GM12878 (cell line): ENCODE measurements at regions of chr13 and their contacts with region 1.

Region 1: DNA sequence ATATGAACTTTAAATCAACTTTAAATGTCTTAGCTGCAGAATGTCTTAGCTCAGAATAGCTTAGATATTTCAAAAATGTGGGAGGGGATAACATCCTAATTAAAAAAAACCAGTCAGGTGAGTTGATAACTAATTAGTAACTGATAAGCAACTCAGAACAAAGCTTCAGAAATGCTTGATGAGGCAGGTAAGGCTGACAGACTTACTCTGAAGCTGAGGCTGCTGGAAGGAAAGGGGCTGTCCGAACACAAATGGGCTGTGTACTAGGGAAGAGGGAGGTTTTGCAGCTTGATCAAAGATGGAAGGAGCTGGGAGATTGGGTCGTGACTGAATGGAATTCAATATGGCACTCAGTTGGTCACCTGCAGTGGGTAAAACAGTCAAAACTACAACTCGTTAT is 91.2 kb upstream of the FBXL3 start:
- DNase-seq: no peak
- ATAC-seq: no peak
- H3K4me3 ChIP-seq: no peak overlapping the region
- H3K27ac ChIP-seq: no peak overlapping the region
- H3K4me1 ChIP-seq: no peaks in the 10 kb centered on the region
- H3K27me3 ChIP-seq: no peaks in the 10 kb centered on the region
- CTCF ChIP-seq: no peak
- EP300 ChIP-seq: no peak
- POLR2A ChIP-seq: no peak
- RAD21 ChIP-seq: no peak

Region 2: DNA sequence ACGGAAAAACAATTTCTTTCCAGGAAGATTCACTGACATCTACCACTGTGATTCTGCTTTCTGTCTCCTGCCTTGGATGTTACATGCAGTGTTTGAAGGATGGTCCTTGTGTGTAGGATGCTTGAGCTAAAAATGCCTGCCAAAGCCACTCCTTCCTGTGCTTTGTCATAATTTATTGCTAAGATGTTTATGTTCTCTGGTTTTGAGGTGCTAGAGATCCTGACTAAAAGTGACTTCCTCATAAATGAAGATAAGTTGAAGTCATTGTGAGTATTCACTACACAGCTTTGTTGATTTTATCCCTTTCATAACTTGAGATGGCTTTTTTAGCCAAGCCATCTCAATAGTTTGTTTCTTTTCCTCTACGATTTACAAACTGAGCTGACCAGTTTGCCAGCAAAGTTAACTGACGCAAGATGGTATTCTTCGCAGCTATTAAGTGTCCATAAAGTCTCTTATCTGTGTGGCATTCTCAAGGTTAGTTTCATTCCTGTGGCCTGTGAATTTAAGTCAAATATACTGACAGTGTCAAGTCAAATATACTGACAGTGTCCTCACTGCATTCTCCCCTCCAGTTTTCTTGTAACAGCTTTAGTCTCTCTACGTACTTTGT is 75.5 kb before region 1 on chr13:
- CTCF ChIA-PET with region 1: no interaction called
- POLR2A ChIA-PET with region 1: no interaction called
- RAD21 ChIA-PET with region 1: no interaction called
- SMC1A ChIA-PET with region 1: no interaction called
- in situ Hi-C with region 1: no loop called
- intact Hi-C with region 1: no loop called
- DNase-seq: no peak
- ATAC-seq: no peak
- H3K4me3 ChIP-seq: no peak overlapping the region
- H3K27ac ChIP-seq: no peak overlapping the region
- H3K4me1 ChIP-seq: no peaks in the 10 kb centered on the region
- H3K27me3 ChIP-seq: no peaks in the 10 kb centered on the region
- CTCF ChIP-seq: no peak
- EP300 ChIP-seq: no peak
- POLR2A ChIP-seq: no peak
- RAD21 ChIP-seq: no peak

Region 3: GRCh38 chr13:77079902-77080413 is 38.2 kb before region 1 on chr13:
- CTCF ChIA-PET with region 1: no interaction called
- POLR2A ChIA-PET with region 1: no interaction called
- RAD21 ChIA-PET with region 1: no interaction called
- SMC1A ChIA-PET with region 1: no interaction called
- in situ Hi-C with region 1: no loop called
- intact Hi-C with region 1: no loop called
- DNase-seq: no peak
- ATAC-seq: no peak
- H3K4me3 ChIP-seq: no peak overlapping the region
- H3K27ac ChIP-seq: no peak overlapping the region
- H3K4me1 ChIP-seq: no peaks in the 10 kb centered on the region
- H3K27me3 ChIP-seq: no peaks in the 10 kb centered on the region
- CTCF ChIP-seq: no peak
- EP300 ChIP-seq: no peak
- POLR2A ChIP-seq: no peak
- RAD21 ChIP-seq: no peak

Region 4: GRCh38 chr13:77136902-77137420 is 18.8 kb after region 1 on chr13:
- CTCF ChIA-PET with region 1: interaction called, 6 read pairs
- POLR2A ChIA-PET with region 1: no interaction called
- RAD21 ChIA-PET with region 1: no interaction called
- SMC1A ChIA-PET with region 1: interaction called, 30 read pairs
- in situ Hi-C with region 1: no loop called
- intact Hi-C with region 1: no loop called
- DNase-seq: no peak
- ATAC-seq: no peak
- H3K4me3 ChIP-seq: no peak overlapping the region
- H3K27ac ChIP-seq: no peak overlapping the region
- H3K4me1 ChIP-seq: no peaks in the 10 kb centered on the region
- H3K27me3 ChIP-seq: no peaks in the 10 kb centered on the region
- CTCF ChIP-seq: no peak
- EP300 ChIP-seq: no peak
- POLR2A ChIP-seq: no peak
- RAD21 ChIP-seq: no peak

Region 5: DNA sequence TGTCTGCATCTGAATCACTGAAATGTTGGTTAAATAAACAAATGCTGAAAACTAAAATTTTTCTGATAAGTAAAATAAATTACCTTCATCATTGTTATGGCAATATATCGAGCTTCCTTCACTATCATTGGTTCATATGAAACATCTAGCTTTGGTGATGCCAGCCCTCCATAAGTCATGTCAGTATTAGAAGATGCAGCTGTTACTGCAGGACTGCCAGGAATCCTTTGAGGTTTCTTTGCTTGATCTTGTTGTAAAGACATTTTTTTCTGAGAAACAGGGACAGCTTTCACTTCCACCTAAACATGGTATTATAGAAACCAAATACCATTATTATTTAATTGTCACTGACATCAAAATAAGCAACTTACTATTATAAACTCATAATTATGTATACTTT is 32.5 kb after region 1 on chr13:
- CTCF ChIA-PET with region 1: no interaction called
- POLR2A ChIA-PET with region 1: no interaction called
- RAD21 ChIA-PET with region 1: no interaction called
- SMC1A ChIA-PET with region 1: no interaction called
- in situ Hi-C with region 1: no loop called
- intact Hi-C with region 1: no loop called
- DNase-seq: no peak
- ATAC-seq: no peak
- H3K4me3 ChIP-seq: no peak overlapping the region
- H3K27ac ChIP-seq: no peak overlapping the region
- H3K4me1 ChIP-seq: no peaks in the 10 kb centered on the region
- H3K27me3 ChIP-seq: no peaks in the 10 kb centered on the region
- CTCF ChIP-seq: no peak
- EP300 ChIP-seq: no peak
- POLR2A ChIP-seq: no peak
- RAD21 ChIP-seq: no peak